T-cell (primary cell): ENCODE measurements at regions of chr3 and their contacts with region 1.

Region 1: GRCh38 chr3:79954756-79955155 is 187.0 kb upstream of the ROBO1 start:
- DNase-seq: no peak
- ATAC-seq: no peak
- H3K4me3 ChIP-seq: no peak overlapping the region
- H3K4me3 Mint-ChIP-seq: no peak overlapping the region
- H3K27ac ChIP-seq: no peak overlapping the region
- H3K27ac Mint-ChIP-seq: no peak overlapping the region
- H3K4me1 ChIP-seq: no peaks in the 10 kb centered on the region
- H3K4me1 Mint-ChIP-seq: no peaks in the 10 kb centered on the region
- H3K27me3 ChIP-seq: no peaks in the 10 kb centered on the region
- H3K27me3 Mint-ChIP-seq: no peaks in the 10 kb centered on the region

Region 2: GRCh38 chr3:79473993-79474392 is 480.8 kb before region 1 on chr3:
- CTCF ChIA-PET with region 1: no interaction called
- POLR2A ChIA-PET with region 1: interaction called in 1 of 2 experiments, 13 read pairs
- DNase-seq: no peak
- ATAC-seq: no peak
- H3K4me3 ChIP-seq: no peak overlapping the region
- H3K4me3 Mint-ChIP-seq: no peak overlapping the region
- H3K27ac ChIP-seq: no peak overlapping the region
- H3K27ac Mint-ChIP-seq: no peak overlapping the region
- H3K4me1 ChIP-seq: no peaks in the 10 kb centered on the region
- H3K4me1 Mint-ChIP-seq: no peaks in the 10 kb centered on the region
- H3K27me3 ChIP-seq: no peaks in the 10 kb centered on the region
- H3K27me3 Mint-ChIP-seq: no peaks in the 10 kb centered on the region